CD4-positive, alpha-beta T cell (primary cell): ENCODE measurements at regions of chr19 and their contacts with region 1.

Region 1: GRCh38 chr19:53103198-53103944 is at the start of gene ZNF160:
- DNase-seq: peak; percentile 97 to 100 (median 99)
- ATAC-seq: peak; percentile 90
- H3K4me3 ChIP-seq: peak within 1 kb of the TSS; percentile 81
- H3K4me3 Mint-ChIP-seq: peak within 1 kb of the TSS; percentile 97
- H3K27ac ChIP-seq: peak within 1 kb of the TSS; percentile 85 to 90
- H3K27ac Mint-ChIP-seq: peak within 1 kb of the TSS; percentile 96
- H3K4me1 ChIP-seq: peaks cover 27% of the 10 kb centered on the region
- H3K4me1 Mint-ChIP-seq: peaks cover 45% of the 10 kb centered on the region
- H3K27me3 ChIP-seq: no peaks in the 10 kb centered on the region
- H3K27me3 Mint-ChIP-seq: no peaks in the 10 kb centered on the region
- CTCF ChIP-seq: no peak
- total RNA-seq, gene ZNF160: 42.1 to 45.5 TPM

Region 2: DNA sequence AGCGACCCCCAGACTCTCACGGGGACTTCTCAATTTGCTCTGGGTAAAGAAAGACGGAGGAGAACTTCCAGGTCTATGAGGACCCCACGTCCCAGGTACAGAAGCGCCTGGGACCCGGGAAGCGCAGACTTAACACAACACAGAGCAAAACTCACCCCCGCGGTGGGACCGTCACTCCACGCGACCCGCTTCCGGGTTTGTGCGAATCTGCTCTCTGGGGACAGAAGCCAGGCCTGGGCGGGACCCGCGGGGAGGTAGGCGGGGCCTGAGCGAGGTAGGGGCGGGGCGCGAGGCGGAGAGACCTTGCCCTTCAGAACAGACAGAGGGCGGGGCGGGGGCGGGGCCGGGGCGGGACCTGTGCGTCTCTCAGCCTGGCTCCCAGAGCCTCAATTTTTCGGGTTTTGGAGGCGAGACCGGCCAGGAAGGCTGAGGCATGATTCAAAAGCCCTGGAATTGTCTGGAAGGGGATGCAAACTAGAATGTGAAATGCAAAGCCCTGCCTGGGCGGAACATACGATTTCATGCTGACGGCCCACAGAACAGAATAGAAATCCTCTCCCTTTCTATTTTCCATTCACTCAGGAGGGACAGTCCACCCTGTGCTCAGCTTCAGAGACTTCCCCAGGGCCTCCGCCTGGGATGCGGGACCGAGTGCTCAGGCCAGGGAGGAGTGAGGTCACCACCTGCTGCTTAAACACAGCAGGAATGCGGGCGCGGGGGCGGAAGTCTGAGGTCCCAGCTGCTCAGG is 160.8 kb before region 1 on chr19:
- CTCF ChIA-PET with region 1: no interaction called
- POLR2A ChIA-PET with region 1: no interaction called
- intact Hi-C with region 1: loop called in 1 of 2 experiments (anchors 5 kb)
- DNase-seq: peak; percentile 89 to 97 (median 94)
- ATAC-seq: peak; percentile 99
- H3K4me3 ChIP-seq: peak overlapping the region; percentile 92
- H3K4me3 Mint-ChIP-seq: peak overlapping the region; percentile 97
- H3K27ac ChIP-seq: peak overlapping the region; percentile 35 to 78
- H3K27ac Mint-ChIP-seq: peak overlapping the region; percentile 91
- H3K4me1 ChIP-seq: peaks cover 24% of the 10 kb centered on the region
- H3K4me1 Mint-ChIP-seq: peaks cover 29% of the 10 kb centered on the region
- H3K27me3 ChIP-seq: no peaks in the 10 kb centered on the region
- H3K27me3 Mint-ChIP-seq: no peaks in the 10 kb centered on the region
- CTCF ChIP-seq: no peak

Region 3: GRCh38 chr19:53132141-53132991 is 29.0 kb after region 1 on chr19 and contains the start of gene ZNF415:
- CTCF ChIA-PET with region 1: no interaction called
- POLR2A ChIA-PET with region 1: interaction called, 3 read pairs
- intact Hi-C with region 1: loop called (anchors 1 kb)
- DNase-seq: peak in 12 of 14 experiments; percentile 2 to 65 (median 36)
- ATAC-seq: peak; percentile 74
- H3K4me3 ChIP-seq: peak within 1 kb of the TSS; percentile 54
- H3K4me3 Mint-ChIP-seq: peak within 1 kb of the TSS; percentile 88
- H3K27ac ChIP-seq: no peak within 1 kb of the TSS
- H3K27ac Mint-ChIP-seq: peak within 1 kb of the TSS; percentile 51
- H3K4me1 ChIP-seq: peaks cover 14% of the 10 kb centered on the region
- H3K4me1 Mint-ChIP-seq: peaks cover 25% of the 10 kb centered on the region
- H3K27me3 ChIP-seq: peaks cover 0 to 8% of the 10 kb centered on the region in 2 experiments
- H3K27me3 Mint-ChIP-seq: no peaks in the 10 kb centered on the region
- CTCF ChIP-seq: no peak
- total RNA-seq, gene ZNF415: 1.2 to 1.7 TPM

Region 4: DNA sequence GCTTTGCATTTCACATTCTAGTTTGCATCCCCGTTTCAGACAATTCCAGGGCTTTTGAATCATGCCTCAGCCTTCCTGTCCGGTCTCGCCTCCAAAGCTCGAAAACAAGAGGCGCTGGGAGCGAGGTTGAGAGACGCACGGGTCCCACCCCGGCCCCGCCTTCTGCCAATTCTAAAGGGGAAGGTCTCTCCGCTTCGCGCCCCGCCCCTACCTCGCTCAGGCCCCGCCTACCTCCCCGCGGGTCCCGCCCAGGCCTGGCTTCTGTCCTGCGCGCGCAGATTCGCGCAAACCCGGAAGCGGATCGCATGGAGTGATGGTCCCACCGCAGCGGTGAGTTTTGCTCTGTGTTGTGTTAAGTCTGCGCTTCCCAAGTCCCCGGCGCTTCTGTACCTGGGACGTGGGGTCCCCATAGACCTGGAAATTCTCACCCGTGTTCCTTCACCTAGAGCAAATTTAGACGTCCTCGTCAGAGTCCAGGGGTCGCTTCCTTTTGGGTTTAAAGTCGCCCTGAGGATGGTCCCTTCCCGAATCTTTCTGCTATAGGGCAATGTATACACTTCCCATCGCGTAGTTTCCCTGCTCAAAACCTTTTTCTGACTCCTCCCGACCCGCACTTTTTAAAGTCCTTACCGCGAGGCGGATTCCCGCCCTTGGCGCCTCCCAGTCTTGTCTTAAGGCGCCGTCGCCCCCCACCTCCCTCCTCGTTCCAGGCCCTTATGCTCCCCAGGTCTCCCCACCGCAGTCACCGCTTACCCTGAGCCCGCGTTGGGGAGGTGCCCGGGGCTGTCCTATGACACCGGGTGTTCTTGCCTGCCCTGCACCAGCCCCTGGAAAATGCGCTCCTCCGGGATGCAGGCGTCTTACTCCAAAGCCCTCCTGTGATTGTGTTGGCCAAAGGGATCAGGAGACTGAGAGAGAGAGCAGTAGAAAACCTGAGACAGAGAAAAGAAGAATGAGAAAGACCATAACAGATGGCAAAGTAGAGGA is 230.4 kb after region 1 on chr19 and contains the start of gene ZNF845:
- CTCF ChIA-PET with region 1: no interaction called
- POLR2A ChIA-PET with region 1: no interaction called
- intact Hi-C with region 1: loop called in 1 of 2 experiments (anchors 10 kb)
- DNase-seq: peak; percentile 91 to 99 (median 95)
- ATAC-seq: peak; percentile 97
- H3K4me3 ChIP-seq: peak within 1 kb of the TSS; percentile 82
- H3K4me3 Mint-ChIP-seq: peak within 1 kb of the TSS; percentile 95
- H3K27ac ChIP-seq: peak within 1 kb of the TSS in 1 of 2 donors; percentile 72
- H3K27ac Mint-ChIP-seq: peak within 1 kb of the TSS; percentile 84
- H3K4me1 ChIP-seq: peaks cover 17% of the 10 kb centered on the region
- H3K4me1 Mint-ChIP-seq: peaks cover 22% of the 10 kb centered on the region
- H3K27me3 ChIP-seq: peaks cover 0 to 4% of the 10 kb centered on the region in 2 experiments
- H3K27me3 Mint-ChIP-seq: peaks cover 8% of the 10 kb centered on the region
- CTCF ChIP-seq: no peak
- total RNA-seq, gene ZNF845: 7.5 to 8.0 TPM

Region 5: GRCh38 chr19:53394974-53395839 is 291.8 kb after region 1 on chr19 and contains the start of gene ZNF765:
- CTCF ChIA-PET with region 1: no interaction called
- POLR2A ChIA-PET with region 1: no interaction called
- intact Hi-C with region 1: loop called in 1 of 2 experiments (anchors 10 kb)
- DNase-seq: peak; percentile 93 to 99 (median 96)
- ATAC-seq: peak; percentile 97
- H3K4me3 ChIP-seq: peak within 1 kb of the TSS; percentile 77
- H3K4me3 Mint-ChIP-seq: peak within 1 kb of the TSS; percentile 93
- H3K27ac ChIP-seq: peak within 1 kb of the TSS; percentile 35 to 65
- H3K27ac Mint-ChIP-seq: peak within 1 kb of the TSS; percentile 93
- H3K4me1 ChIP-seq: peaks cover 13% of the 10 kb centered on the region
- H3K4me1 Mint-ChIP-seq: peaks cover 33% of the 10 kb centered on the region
- H3K27me3 ChIP-seq: no peaks in the 10 kb centered on the region
- H3K27me3 Mint-ChIP-seq: no peaks in the 10 kb centered on the region
- CTCF ChIP-seq: peak; percentile 56
- total RNA-seq, gene ZNF765: 6.7 to 9.0 TPM